A673 (cell line): ENCODE measurements at regions of chrX and their contacts with region 1.

Region 1: DNA sequence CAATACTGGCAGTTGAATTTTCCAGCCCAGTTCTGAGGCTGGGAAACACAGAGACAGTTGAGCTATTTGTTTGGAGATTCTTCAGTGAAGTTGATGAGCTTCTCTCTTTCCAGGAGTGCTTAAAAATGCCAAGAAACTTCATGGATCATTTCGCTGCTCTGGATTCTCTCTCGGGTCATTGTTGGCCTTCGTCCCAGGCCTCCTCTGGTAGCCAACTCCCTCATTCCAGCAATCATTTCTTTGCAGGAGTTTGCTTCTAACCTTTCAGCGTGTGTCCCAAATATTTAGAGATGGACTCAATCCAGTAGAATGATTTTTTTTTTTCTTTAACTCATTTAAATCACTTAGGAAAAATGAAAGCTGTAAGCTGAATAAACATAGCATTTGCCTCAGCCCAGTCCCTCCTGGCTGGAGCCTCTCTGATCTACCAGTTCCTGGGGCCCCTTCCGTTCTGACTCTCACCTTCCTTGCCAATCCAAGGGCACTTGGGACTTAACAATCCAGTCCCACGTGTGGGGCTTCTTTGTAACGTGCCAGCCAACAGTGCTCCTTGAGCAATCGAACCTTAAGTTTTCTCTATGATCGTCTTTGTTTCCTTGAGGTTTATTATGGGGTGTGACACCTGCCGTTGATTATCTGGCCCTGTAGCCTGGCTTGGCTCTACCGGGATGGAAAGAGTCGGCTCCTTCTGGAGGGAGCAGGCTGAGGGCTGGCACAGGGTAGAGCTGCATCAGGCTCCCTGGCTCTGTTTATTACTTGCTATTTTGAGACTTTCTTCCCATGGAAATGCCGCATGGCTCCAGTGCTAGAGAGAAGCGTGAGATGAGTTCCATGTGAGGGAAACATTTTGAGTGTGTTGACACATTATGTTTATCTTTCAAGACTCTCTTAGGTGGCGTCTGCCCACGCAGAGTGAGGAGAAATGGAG is 80.4 kb upstream of the GPC4 start:
- DNase-seq: no peak
- H3K4me3 ChIP-seq: no peak overlapping the region
- H3K27ac ChIP-seq: no peak overlapping the region
- H3K4me1 ChIP-seq: peaks cover 15% of the 10 kb centered on the region
- H3K27me3 ChIP-seq: no peaks in the 10 kb centered on the region
- CTCF ChIP-seq: no peak

Region 2: GRCh38 chrX:133415276-133416105 is 80.2 kb before region 1 on chrX and contains the start of gene GPC4:
- CTCF ChIA-PET with region 1: no interaction called
- POLR2A ChIA-PET with region 1: no interaction called
- intact Hi-C with region 1: no loop called
- DNase-seq: peak; percentile 81
- H3K4me3 ChIP-seq: peak within 1 kb of the TSS; percentile 65
- H3K27ac ChIP-seq: peak within 1 kb of the TSS; percentile 65
- H3K4me1 ChIP-seq: peaks cover under 1% of the 10 kb centered on the region
- H3K27me3 ChIP-seq: no peaks in the 10 kb centered on the region
- CTCF ChIP-seq: no peak
- total RNA-seq, gene GPC4: 17.8 and 19.4 TPM in 2 replicates

Region 3: GRCh38 chrX:133468046-133468445 is 27.7 kb before region 1 on chrX:
- CTCF ChIA-PET with region 1: no interaction called
- POLR2A ChIA-PET with region 1: no interaction called
- intact Hi-C with region 1: no loop called
- DNase-seq: no peak
- H3K4me3 ChIP-seq: no peak overlapping the region
- H3K27ac ChIP-seq: no peak overlapping the region
- H3K4me1 ChIP-seq: no peaks in the 10 kb centered on the region
- H3K27me3 ChIP-seq: no peaks in the 10 kb centered on the region
- CTCF ChIP-seq: no peak

Region 4: GRCh38 chrX:133715715-133716114 is 220.0 kb after region 1 on chrX:
- CTCF ChIA-PET with region 1: no interaction called
- POLR2A ChIA-PET with region 1: interaction called, 18 read pairs
- intact Hi-C with region 1: no loop called
- DNase-seq: no peak
- H3K4me3 ChIP-seq: no peak overlapping the region
- H3K27ac ChIP-seq: no peak overlapping the region
- H3K4me1 ChIP-seq: no peaks in the 10 kb centered on the region
- H3K27me3 ChIP-seq: peaks cover 9% of the 10 kb centered on the region
- CTCF ChIP-seq: no peak